PC-3 (cell line): ENCODE measurements at regions of chr11 and their contacts with region 1.

Region 1: GRCh38 chr11:102733232-102733875 is 8.6 kb upstream of the MMP8 start:
- DNase-seq: peak; percentile 91
- ATAC-seq: peak; percentile 99
- H3K4me3 ChIP-seq: no peak overlapping the region
- H3K27ac ChIP-seq: no peak overlapping the region
- H3K4me1 ChIP-seq: no peaks in the 10 kb centered on the region
- H3K27me3 ChIP-seq: no peaks in the 10 kb centered on the region
- CTCF ChIP-seq: peak; percentile 99

Region 2: DNA sequence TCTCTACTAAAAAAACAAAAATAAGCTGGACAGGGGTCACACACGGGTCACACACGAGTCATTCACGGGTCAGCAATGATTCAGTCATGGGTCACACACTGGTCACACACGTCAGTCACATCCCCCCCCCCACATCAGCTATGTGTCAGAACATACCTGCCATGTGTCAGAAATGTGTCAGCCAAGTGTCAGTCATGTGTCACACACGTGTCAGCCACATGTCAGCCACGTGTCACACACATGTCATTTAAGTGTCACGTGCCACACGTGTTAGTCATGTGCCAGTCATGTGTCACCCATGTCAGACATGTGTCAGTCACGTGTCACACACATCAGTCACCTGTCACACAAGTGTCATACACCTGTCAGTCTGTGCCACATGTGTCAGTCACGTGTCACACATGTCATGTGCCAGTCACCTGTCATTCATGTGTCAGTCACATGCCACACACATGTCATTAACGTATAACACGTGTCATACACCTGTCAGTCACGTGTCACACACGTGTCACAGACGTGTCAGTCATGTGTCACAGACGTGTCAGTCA is 79.5 kb before region 1 on chr11:
- CTCF ChIA-PET with region 1: no interaction called
- POLR2A ChIA-PET with region 1: no interaction called
- intact Hi-C with region 1: no loop called
- DNase-seq: peak; percentile 41
- ATAC-seq: no peak
- H3K4me3 ChIP-seq: no peak overlapping the region
- H3K27ac ChIP-seq: no peak overlapping the region
- H3K4me1 ChIP-seq: no peaks in the 10 kb centered on the region
- H3K27me3 ChIP-seq: 0 out of 2 replicates have a peak, but pooled peaks cover under 1% of the 10 kb centered on the region
- CTCF ChIP-seq: no peak

Region 3: DNA sequence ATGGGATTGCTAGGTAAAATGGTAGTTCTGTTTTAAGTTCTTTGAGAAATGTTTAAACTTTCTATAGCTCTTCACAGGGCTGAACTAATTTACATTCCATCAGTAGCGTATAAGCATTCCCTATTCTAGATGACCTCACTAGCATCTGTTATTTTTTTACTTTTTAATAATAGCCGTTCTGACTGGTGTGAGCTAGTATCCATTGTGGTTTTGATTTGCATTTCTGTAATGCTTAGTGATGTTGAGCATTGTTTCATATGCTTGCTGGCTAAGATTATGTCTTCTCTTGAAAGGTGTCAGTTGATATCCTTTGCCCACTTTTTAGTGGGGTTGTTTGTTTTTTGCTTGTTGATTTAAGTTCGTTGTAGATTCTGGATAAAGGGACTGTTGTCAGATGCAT is 63.7 kb before region 1 on chr11:
- CTCF ChIA-PET with region 1: no interaction called
- POLR2A ChIA-PET with region 1: no interaction called
- intact Hi-C with region 1: no loop called
- DNase-seq: no peak
- ATAC-seq: no peak
- H3K4me3 ChIP-seq: no peak overlapping the region
- H3K27ac ChIP-seq: no peak overlapping the region
- H3K4me1 ChIP-seq: no peaks in the 10 kb centered on the region
- H3K27me3 ChIP-seq: no peaks in the 10 kb centered on the region
- CTCF ChIP-seq: no peak

Region 4: GRCh38 chr11:102780491-102780918 is 47.2 kb after region 1 on chr11 and contains the start of gene MMP10:
- CTCF ChIA-PET with region 1: interaction called, 4 read pairs
- POLR2A ChIA-PET with region 1: no interaction called
- intact Hi-C with region 1: loop called (anchors 1 kb)
- DNase-seq: peak; percentile 92
- ATAC-seq: peak; percentile 54
- H3K4me3 ChIP-seq: no peak within 1 kb of the TSS
- H3K27ac ChIP-seq: peak within 1 kb of the TSS; percentile 18
- H3K4me1 ChIP-seq: peaks cover 23% of the 10 kb centered on the region
- H3K27me3 ChIP-seq: no peaks in the 10 kb centered on the region
- CTCF ChIP-seq: peak; percentile 87
- total RNA-seq, gene MMP10: 0.07 and 0.69 TPM in 2 replicates

Region 5: DNA sequence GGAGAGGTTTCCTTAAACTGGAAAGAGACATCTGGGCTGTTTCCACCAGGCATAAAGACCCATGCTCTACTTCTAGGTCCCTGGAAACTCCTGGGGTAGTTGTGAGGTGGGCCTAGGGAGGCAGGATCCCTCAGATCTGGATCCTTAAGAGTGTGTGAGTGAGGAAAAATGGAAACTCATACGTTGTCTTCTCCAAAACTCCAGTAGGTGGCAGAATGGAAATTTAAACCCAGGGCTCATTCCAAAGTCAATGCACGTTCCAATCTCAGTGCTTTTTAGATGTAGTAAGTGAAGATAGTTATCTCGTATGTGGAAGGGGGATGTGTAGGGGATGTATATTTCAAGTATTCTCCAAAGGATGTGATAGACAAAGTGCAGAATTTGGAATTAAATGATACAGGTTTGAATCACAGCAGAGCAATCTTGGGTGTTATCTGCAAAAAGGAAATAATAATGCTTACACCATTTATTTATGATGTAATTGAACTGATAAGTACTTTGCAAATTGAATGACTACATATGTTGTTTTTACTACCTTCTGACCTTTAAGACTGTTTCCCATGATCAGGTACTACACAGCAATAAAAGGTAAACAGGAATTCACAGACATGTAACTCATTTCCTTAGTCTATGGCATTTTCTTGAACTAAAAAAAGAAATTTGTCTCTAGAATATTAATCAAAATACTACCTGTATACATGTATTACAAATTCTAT is 77.7 kb after region 1 on chr11:
- CTCF ChIA-PET with region 1: no interaction called
- POLR2A ChIA-PET with region 1: no interaction called
- intact Hi-C with region 1: loop called (anchors 1 kb)
- DNase-seq: peak; percentile 69
- ATAC-seq: peak; percentile 86
- H3K4me3 ChIP-seq: no peak overlapping the region
- H3K27ac ChIP-seq: no peak overlapping the region
- H3K4me1 ChIP-seq: 0 out of 2 replicates have a peak, but pooled peaks cover 5% of the 10 kb centered on the region
- H3K27me3 ChIP-seq: no peaks in the 10 kb centered on the region
- CTCF ChIP-seq: peak; percentile 88

Region 6: GRCh38 chr11:102849319-102849718 is 116.0 kb after region 1 on chr11:
- CTCF ChIA-PET with region 1: no interaction called
- POLR2A ChIA-PET with region 1: no interaction called
- intact Hi-C with region 1: no loop called
- DNase-seq: peak; percentile 85
- ATAC-seq: no peak
- H3K4me3 ChIP-seq: no peak overlapping the region
- H3K27ac ChIP-seq: no peak overlapping the region
- H3K4me1 ChIP-seq: peaks cover 41% of the 10 kb centered on the region
- H3K27me3 ChIP-seq: no peaks in the 10 kb centered on the region
- CTCF ChIP-seq: no peak

Region 7: DNA sequence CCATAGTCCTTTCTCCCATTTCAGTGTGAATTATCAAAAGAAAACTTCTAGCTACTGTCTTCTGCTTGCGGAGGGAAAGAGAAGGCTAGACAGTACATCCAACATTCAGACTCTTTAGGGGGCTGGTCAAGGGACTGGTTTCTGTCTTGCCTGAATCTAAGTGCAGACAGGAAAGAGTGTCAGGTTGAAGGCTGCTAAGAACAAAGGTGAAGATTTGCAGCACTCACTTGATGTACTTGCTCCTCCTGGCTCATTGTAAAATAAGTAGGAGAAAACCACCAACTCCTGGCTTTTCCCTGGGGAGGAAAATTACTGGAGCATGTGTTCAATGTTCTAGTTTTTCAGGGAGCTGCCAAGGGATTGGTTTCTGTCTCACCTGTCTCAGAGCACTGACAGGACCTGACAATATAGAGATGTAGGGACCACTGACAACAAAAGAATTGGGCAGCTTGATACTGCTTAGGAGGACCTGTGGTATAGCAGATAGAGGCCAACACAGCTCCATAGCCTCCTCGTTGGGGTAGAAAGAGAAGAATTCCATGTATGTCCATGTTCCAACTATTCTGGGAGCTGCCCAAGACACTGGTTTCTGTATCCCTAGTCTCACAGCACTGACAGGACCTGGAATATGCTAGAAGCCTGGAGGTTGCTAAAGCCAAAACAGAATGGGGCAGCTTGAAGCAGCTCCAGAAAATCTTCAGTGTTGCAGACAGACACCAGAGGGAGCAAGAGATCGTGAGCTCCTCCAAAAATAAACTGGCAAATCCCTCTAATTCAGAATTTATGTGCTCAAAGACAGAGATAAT is 181.1 kb after region 1 on chr11:
- CTCF ChIA-PET with region 1: interaction called, 3 read pairs
- POLR2A ChIA-PET with region 1: no interaction called
- intact Hi-C with region 1: loop called (anchors 1 kb)
- DNase-seq: peak; percentile 76
- ATAC-seq: peak; percentile 86
- H3K4me3 ChIP-seq: no peak overlapping the region
- H3K27ac ChIP-seq: no peak overlapping the region
- H3K4me1 ChIP-seq: peaks cover 15% of the 10 kb centered on the region
- H3K27me3 ChIP-seq: no peaks in the 10 kb centered on the region
- CTCF ChIP-seq: peak; percentile 93

Region 8: GRCh38 chr11:102940714-102941588 is 207.6 kb after region 1 on chr11:
- CTCF ChIA-PET with region 1: interaction called, 4 read pairs
- POLR2A ChIA-PET with region 1: no interaction called
- intact Hi-C with region 1: loop called (anchors 1 kb)
- DNase-seq: peak; percentile 96
- ATAC-seq: peak; percentile 93
- H3K4me3 ChIP-seq: no peak overlapping the region
- H3K27ac ChIP-seq: no peak overlapping the region
- H3K4me1 ChIP-seq: peaks cover 14% of the 10 kb centered on the region; the same call in 1 of the 2 replicates
- H3K27me3 ChIP-seq: no peaks in the 10 kb centered on the region
- CTCF ChIP-seq: peak; percentile 95

Region 9: DNA sequence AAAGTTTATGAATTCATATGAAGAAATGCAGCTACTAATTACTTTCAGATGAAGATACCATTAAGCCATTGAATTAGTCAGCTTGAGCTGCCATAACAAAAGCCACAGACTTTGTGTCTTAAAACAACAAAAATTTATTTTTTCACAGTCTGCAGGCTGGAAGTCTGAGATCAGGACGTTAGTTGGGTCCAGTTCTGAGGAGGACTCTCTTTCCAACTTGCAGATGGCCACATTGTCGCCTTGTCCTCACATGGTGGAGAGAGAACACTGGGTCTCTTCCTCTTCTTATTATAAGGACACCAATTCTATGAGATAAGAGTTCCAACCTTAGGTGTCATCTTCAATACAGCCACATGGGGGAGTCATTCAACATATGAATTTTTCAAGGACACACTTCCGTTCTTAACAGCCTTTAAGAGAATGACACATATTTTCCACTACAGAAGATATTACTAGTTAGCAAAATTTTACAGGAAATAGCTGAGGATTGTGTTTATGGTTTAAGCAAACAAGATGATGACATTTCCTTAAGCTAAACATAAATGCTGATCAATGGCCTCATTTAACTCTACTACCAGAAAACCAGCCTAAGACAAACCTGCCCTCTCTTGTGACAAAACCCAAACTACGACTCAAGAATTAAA is 302.6 kb after region 1 on chr11:
- CTCF ChIA-PET with region 1: no interaction called
- POLR2A ChIA-PET with region 1: no interaction called
- intact Hi-C with region 1: loop called (anchors 5 kb)
- DNase-seq: peak; percentile 96
- ATAC-seq: peak; percentile 90
- H3K4me3 ChIP-seq: no peak overlapping the region
- H3K27ac ChIP-seq: peak overlapping the region; percentile 31
- H3K4me1 ChIP-seq: peaks cover 8% of the 10 kb centered on the region
- H3K27me3 ChIP-seq: no peaks in the 10 kb centered on the region
- CTCF ChIP-seq: peak; percentile 89